Panc1 (cell line): ENCODE measurements at regions of chr12 and their contacts with region 1.

Region 1: DNA sequence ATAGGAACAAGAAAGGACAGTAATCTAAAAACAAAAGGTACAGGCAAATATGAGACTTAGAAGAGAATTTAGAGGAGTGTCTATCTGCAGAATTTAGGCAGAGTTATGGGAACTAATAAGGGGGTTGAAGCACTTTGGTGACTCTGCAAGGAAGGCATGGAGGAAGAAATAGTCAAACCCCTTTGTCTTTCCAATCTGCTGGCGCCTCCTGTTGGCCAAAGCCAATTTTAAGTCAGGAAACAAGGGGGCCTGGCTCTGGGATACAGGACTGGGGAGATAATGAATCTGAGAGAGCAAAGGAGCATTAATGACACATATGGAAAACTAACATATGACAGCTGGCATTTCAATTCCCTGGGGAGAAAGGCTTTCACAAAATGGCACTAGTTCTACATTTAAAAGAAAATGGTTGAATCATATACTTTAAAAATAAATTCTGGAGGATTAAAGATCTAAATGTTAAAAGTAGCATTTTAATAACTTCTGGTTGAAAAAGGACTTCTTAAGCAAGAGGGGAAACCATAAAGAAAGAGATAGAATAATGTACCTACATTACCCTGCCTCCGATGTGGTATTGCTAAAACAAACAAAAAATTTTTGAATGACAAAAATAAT is 48.5 kb upstream of the CSRP2 start:
- DNase-seq: no peak
- ATAC-seq: peak; percentile 53; the same call in 1 of the 2 replicates
- H3K4me3 ChIP-seq: no peak overlapping the region
- H3K27ac ChIP-seq: no peak overlapping the region
- H3K4me1 ChIP-seq: no peaks in the 10 kb centered on the region
- H3K27me3 ChIP-seq: peaks cover 9% of the 10 kb centered on the region; the same call in 1 of the 2 replicates
- CTCF ChIP-seq: peak; percentile 78

Region 2: GRCh38 chr12:76720068-76720467 is 207.2 kb before region 1 on chr12:
- CTCF ChIA-PET with region 1: no interaction called
- POLR2A ChIA-PET with region 1: no interaction called
- in situ Hi-C with region 1: no loop called
- intact Hi-C with region 1: no loop called
- DNase-seq: no peak
- ATAC-seq: no peak
- H3K4me3 ChIP-seq: no peak overlapping the region
- H3K27ac ChIP-seq: no peak overlapping the region
- H3K4me1 ChIP-seq: no peaks in the 10 kb centered on the region
- H3K27me3 ChIP-seq: no peaks in the 10 kb centered on the region; the same call in 1 of the 2 replicates
- CTCF ChIP-seq: no peak

Region 3: DNA sequence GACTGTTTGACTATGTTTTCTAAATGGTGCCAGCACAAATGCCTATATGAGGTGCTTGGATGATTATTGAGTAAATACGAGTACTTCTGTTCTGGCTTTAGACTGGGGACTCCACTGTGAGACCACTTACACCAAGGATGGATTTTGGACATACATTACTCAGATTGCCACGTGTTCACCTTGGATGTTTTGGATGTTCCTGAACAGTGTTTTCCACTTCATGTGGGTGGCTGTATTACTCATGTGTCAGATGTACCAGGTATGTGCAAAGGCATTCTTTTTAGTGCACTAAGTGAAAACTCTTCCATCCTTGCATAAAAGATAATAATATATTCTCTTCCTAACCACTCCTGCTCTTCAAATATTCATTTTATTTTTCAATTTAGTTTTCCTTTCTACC is 79.1 kb before region 1 on chr12:
- CTCF ChIA-PET with region 1: no interaction called
- POLR2A ChIA-PET with region 1: no interaction called
- in situ Hi-C with region 1: no loop called
- intact Hi-C with region 1: loop called (anchors 10 kb)
- DNase-seq: no peak
- ATAC-seq: no peak
- H3K4me3 ChIP-seq: no peak overlapping the region
- H3K27ac ChIP-seq: no peak overlapping the region
- H3K4me1 ChIP-seq: no peaks in the 10 kb centered on the region
- H3K27me3 ChIP-seq: no peaks in the 10 kb centered on the region
- CTCF ChIP-seq: no peak

Region 4: GRCh38 chr12:77577791-77578190 is 650.5 kb after region 1 on chr12:
- CTCF ChIA-PET with region 1: no interaction called
- POLR2A ChIA-PET with region 1: no interaction called
- in situ Hi-C with region 1: no loop called
- intact Hi-C with region 1: no loop called
- DNase-seq: no peak
- ATAC-seq: no peak
- H3K4me3 ChIP-seq: no peak overlapping the region
- H3K27ac ChIP-seq: no peak overlapping the region
- H3K4me1 ChIP-seq: no peaks in the 10 kb centered on the region
- H3K27me3 ChIP-seq: no peaks in the 10 kb centered on the region
- CTCF ChIP-seq: no peak